ENCODE measurements at regions of chr3 and their contacts with region 1.

Region 1: GRCh38 chr3:115092220-115092791 is 54.8 kb downstream of the ZBTB20 start:
- DNase-seq: peak; percentile 38 to 74
- ATAC-seq: peak; percentile 100
- H3K4me3 ChIP-seq: no peak overlapping the region
- H3K27ac ChIP-seq: no peak overlapping the region
- H3K4me1 ChIP-seq: no peaks in the 10 kb centered on the region
- CTCF ChIP-seq: peak; percentile 59
- EP300 ChIP-seq: no peak
- POLR2A ChIP-seq: no peak
- RAD21 ChIP-seq: peak; percentile 64 to 70; a peak in 4 of 5 replicates

Region 2: GRCh38 chr3:115077501-115078250 is 14.6 kb before region 1 on chr3:
- CTCF ChIA-PET with region 1: interaction called, 11 read pairs
- POLR2A ChIA-PET with region 1: no interaction called
- DNase-seq: no peak
- ATAC-seq: no peak
- H3K4me3 ChIP-seq: no peak overlapping the region
- H3K27ac ChIP-seq: no peak overlapping the region
- H3K4me1 ChIP-seq: no peaks in the 10 kb centered on the region
- CTCF ChIP-seq: no peak
- EP300 ChIP-seq: no peak
- POLR2A ChIP-seq: no peak
- RAD21 ChIP-seq: no peak

Region 3: GRCh38 chr3:115111632-115112031 is 19.3 kb after region 1 on chr3:
- CTCF ChIA-PET with region 1: interaction called, 11 read pairs
- POLR2A ChIA-PET with region 1: no interaction called
- DNase-seq: no peak
- ATAC-seq: no peak
- H3K4me3 ChIP-seq: no peak overlapping the region
- H3K27ac ChIP-seq: no peak overlapping the region
- H3K4me1 ChIP-seq: no peaks in the 10 kb centered on the region
- CTCF ChIP-seq: no peak
- EP300 ChIP-seq: no peak
- POLR2A ChIP-seq: no peak
- RAD21 ChIP-seq: no peak

Region 4: DNA sequence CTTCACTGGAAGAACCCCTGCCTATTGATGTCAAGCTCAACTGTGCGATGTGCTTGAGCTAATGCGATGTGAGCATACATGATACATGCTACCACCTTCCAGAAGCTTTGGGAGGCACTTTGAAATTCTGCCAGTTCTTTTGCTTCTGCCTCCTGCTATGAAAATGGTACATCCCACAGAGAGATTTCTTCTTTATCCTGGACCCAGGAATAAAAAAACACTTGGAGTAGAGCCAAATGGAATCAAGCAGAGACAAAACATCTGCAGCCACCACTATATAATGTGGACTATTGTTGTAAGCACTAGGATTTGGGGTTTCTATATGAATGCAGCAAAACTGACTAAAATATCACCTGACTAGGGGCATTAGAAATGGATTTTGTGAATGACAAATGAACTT is 411.1 kb after region 1 on chr3:
- CTCF ChIA-PET with region 1: no interaction called
- POLR2A ChIA-PET with region 1: no interaction called
- DNase-seq: no peak
- ATAC-seq: no peak
- H3K4me3 ChIP-seq: no peak overlapping the region
- H3K27ac ChIP-seq: no peak overlapping the region
- H3K4me1 ChIP-seq: no peaks in the 10 kb centered on the region
- CTCF ChIP-seq: no peak
- EP300 ChIP-seq: no peak
- POLR2A ChIP-seq: no peak
- RAD21 ChIP-seq: no peak